GM12878 (cell line): ENCODE measurements at regions of chr4 and their contacts with region 1.

Region 1: DNA sequence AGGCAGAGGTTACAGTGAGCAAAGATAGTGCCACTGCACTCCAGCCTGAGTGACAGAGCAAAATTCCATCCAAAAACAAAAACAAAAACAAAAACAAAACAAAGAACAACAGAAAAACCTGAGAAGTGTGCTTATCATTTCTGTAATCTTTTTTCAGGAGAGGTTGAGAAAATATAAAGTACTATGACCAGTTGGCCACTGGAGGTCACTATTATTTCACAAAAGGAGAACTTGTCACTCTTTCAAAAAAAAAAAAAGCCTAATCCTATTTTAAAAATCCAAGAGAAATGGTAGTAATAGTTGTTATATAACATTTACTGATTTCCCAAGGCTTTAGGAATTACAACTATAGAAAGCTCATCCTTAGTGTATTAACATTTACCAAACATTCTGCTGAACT is 24.9 kb upstream of the RNF150 start:
- DNase-seq: no peak
- ATAC-seq: 0 out of 3 replicates have a peak, but pooled peaks have one; percentile 38
- H3K4me3 ChIP-seq: no peak overlapping the region
- H3K27ac ChIP-seq: no peak overlapping the region
- H3K4me1 ChIP-seq: no peaks in the 10 kb centered on the region
- H3K27me3 ChIP-seq: no peaks in the 10 kb centered on the region
- CTCF ChIP-seq: peak; percentile 17 to 52 (median 36); a peak in 2 of 6 replicates
- EP300 ChIP-seq: no peak
- POLR2A ChIP-seq: no peak
- RAD21 ChIP-seq: peak; percentile 68

Region 2: DNA sequence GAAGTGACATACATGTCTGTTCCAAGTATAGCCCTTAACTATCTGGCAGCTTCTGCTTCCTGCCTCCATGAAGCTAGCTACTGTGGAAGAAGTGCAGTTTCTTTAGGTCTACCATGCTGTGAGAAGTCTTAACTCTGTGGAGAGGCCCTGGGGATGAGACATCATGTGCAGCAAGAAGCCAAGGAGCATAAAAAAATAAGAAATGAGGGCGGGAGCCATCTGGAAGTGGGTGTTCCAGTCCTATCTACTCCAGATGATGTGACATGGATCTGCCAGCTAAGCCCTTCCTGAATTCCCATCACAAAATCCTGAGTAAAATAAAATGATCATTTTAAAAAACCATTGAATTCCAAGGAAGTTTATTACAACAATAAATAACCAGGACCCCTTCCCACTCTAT is 314.2 kb before region 1 on chr4:
- CTCF ChIA-PET with region 1: no interaction called
- POLR2A ChIA-PET with region 1: no interaction called
- RAD21 ChIA-PET with region 1: no interaction called
- SMC1A ChIA-PET with region 1: no interaction called
- in situ Hi-C with region 1: no loop called
- intact Hi-C with region 1: no loop called
- DNase-seq: no peak
- ATAC-seq: no peak
- H3K4me3 ChIP-seq: no peak overlapping the region
- H3K27ac ChIP-seq: no peak overlapping the region
- H3K4me1 ChIP-seq: no peaks in the 10 kb centered on the region
- H3K27me3 ChIP-seq: no peaks in the 10 kb centered on the region
- CTCF ChIP-seq: no peak
- EP300 ChIP-seq: no peak
- POLR2A ChIP-seq: no peak
- RAD21 ChIP-seq: no peak

Region 3: GRCh38 chr4:142719854-142720541 is 1561.8 kb after region 1 on chr4:
- CTCF ChIA-PET with region 1: no interaction called
- POLR2A ChIA-PET with region 1: no interaction called
- RAD21 ChIA-PET with region 1: no interaction called
- SMC1A ChIA-PET with region 1: interaction called, 3 read pairs
- in situ Hi-C with region 1: no loop called
- intact Hi-C with region 1: loop called (anchors 2 kb)
- DNase-seq: no peak
- ATAC-seq: peak; percentile 67
- H3K4me3 ChIP-seq: no peak overlapping the region
- H3K27ac ChIP-seq: no peak overlapping the region
- H3K4me1 ChIP-seq: no peaks in the 10 kb centered on the region
- H3K27me3 ChIP-seq: no peaks in the 10 kb centered on the region
- CTCF ChIP-seq: peak; percentile 19 to 49 (median 32); a peak in 3 of 6 replicates
- EP300 ChIP-seq: no peak
- POLR2A ChIP-seq: no peak
- RAD21 ChIP-seq: peak; percentile 54

Region 4: GRCh38 chr4:142840516-142841123 is 1682.4 kb after region 1 on chr4:
- CTCF ChIA-PET with region 1: interaction called, 4 read pairs
- POLR2A ChIA-PET with region 1: no interaction called
- RAD21 ChIA-PET with region 1: interaction called, 3 read pairs
- SMC1A ChIA-PET with region 1: no interaction called
- in situ Hi-C with region 1: loop called (anchors 10 kb)
- intact Hi-C with region 1: loop called (anchors 2 kb)
- DNase-seq: no peak
- ATAC-seq: peak; percentile 53; the same call in 1 of the 3 replicates
- H3K4me3 ChIP-seq: no peak overlapping the region
- H3K27ac ChIP-seq: no peak overlapping the region
- H3K4me1 ChIP-seq: no peaks in the 10 kb centered on the region
- H3K27me3 ChIP-seq: peaks cover 2 to 4% of the 10 kb centered on the region in 2 experiments; a peak in 1 of 4 replicates
- CTCF ChIP-seq: peak; percentile 40 to 47 (median 43); a peak in 4 of 6 replicates
- EP300 ChIP-seq: no peak
- POLR2A ChIP-seq: no peak
- RAD21 ChIP-seq: peak; percentile 52